Sigmoid colon (tissue), 7 donors: ENCODE measurements at regions of chr6 and their contacts with region 1.

Region 1: GRCh38 chr6:29976588-29977424 is 34.5 kb downstream of the HLA-A start:
- DNase-seq: peak; percentile 92
- H3K4me3 ChIP-seq: peak overlapping the region; percentile 26 to 58 (median 54)
- H3K27ac ChIP-seq: peak overlapping the region; percentile 89 to 97 (median 93)
- H3K4me1 ChIP-seq: peaks cover 0 to 27% (median 24%) of the 10 kb centered on the region in 4 donors
- H3K27me3 ChIP-seq: no peaks in the 10 kb centered on the region
- CTCF ChIP-seq: peak in 3 of 4 experiments; percentile 16 to 34 (median 18)
- EP300 ChIP-seq: no peak
- POLR2A ChIP-seq: peak; percentile 59 to 62

Region 2: DNA sequence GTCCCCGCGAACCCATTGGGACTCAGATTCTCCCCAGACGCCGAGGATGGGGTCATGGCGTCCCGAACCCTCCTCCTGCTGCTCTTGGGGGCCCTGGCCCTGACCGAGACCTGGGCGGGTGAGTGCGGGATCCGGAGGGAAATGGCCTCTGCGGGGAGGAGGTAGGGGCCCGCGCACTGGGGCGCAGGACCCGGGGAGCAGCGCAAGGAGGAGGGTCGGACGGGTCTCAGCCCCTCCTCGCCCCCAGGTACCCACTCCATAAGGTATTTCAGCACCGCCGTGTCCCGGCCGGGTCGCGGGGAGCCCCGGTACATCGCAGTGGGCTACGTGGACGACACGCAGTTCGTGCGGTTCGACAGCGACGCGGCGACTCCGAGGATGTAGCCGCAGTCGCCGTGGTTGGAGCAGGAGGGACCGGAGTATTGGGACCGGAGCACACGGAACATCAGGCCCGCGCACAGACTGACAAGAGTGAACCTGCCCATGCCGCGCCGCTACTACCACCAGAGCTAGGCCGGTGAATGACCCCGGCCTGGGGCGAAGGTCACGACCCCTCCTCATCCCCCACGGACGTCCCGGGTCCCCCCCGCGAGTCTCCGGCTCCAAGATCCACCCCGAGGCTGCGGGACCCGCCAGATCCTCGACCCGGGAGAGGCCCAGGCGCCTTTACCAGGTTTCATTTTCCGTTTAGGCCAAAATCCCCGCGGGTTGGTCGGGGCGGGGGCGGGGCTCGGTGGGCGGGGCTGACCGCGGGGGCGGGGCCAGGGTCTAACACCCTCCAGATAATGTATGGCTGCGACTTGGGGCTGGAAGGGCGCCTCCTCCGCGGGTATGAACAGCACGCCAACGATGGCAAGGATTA is 50.2 kb before region 1 on chr6:
- intact Hi-C with region 1: loop called (anchors 5 kb)
- DNase-seq: peak; percentile 81
- H3K4me3 ChIP-seq: peak overlapping the region in 3 of 4 donors; percentile 48 to 69 (median 53)
- H3K27ac ChIP-seq: peak overlapping the region in 3 of 4 donors; percentile 82 to 86 (median 84)
- H3K4me1 ChIP-seq: peaks cover 0 to 4% (median 0%) of the 10 kb centered on the region in 4 donors
- H3K27me3 ChIP-seq: no peaks in the 10 kb centered on the region
- CTCF ChIP-seq: no peak
- EP300 ChIP-seq: no peak
- POLR2A ChIP-seq: peak; percentile 9 to 39

Region 3: DNA sequence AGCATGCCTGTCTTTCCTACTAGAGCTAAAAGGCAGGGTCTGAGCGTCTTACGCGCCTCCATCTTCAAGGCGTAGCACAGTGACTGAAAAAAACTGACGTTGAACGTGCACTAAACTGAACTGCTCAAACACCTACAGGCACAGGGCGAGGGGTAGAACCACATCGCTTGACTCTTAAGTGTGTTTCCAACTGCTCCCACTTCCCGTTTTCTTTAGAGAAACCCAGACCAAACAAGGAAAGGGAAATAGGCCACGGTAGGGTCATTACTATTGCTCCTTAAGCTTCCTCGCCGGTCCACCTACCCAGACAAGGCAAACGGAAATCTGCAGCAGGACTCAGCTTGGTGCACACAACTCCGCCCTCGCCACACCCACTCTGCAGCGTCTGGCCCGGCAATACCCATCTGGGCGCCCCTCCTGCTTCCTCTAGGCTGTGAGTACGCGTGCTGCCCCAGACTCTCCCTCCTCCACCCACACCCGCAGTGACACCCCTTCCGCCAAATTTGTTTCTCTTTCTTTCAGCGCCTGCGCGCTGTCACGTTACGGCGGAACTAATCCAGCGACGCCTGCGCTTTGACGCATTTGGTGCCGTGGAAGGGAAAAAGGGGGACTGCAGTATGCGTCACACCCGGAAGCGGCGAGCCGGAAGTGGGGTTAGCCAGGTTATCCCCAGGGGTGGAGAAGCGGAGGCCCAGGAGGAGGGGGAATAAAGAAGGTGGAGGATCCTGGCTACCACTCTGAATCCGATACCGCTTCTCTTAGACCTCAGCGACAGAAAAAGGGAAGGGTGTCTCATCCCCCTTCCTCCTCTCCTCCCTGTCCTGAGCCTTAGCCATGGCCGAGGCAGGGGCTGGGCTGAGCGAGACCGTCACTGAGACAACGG is 90.0 kb after region 1 on chr6 and contains the start of gene PPP1R11:
- intact Hi-C with region 1: loop called (anchors 10 kb)
- DNase-seq: peak; percentile 100
- H3K4me3 ChIP-seq: peak within 1 kb of the TSS; percentile 52 to 80 (median 62)
- H3K27ac ChIP-seq: peak within 1 kb of the TSS; percentile 81 to 93 (median 88)
- H3K4me1 ChIP-seq: peaks cover 0 to 42% (median 37%) of the 10 kb centered on the region in 4 donors
- H3K27me3 ChIP-seq: peaks cover 5 to 27% (median 16%) of the 10 kb centered on the region in 3 donors
- CTCF ChIP-seq: no peak
- EP300 ChIP-seq: peak in 1 of 4 donors; percentile 91
- POLR2A ChIP-seq: peak; percentile 86 to 93
- total RNA-seq, gene PPP1R11: 36.8 to 45.7 (median 42.2) TPM